PC-9 (cell line): ENCODE measurements at regions of chr13 and their contacts with region 1.

Region 1: GRCh38 chr13:106520205-106521054 is 15.0 kb downstream of the EFNB2 start:
- DNase-seq: no peak
- H3K4me3 ChIP-seq: peak overlapping the region; percentile 41; the same call in 1 of the 2 replicates
- H3K27ac ChIP-seq: peak overlapping the region; percentile 79
- H3K4me1 ChIP-seq: peaks cover 55% of the 10 kb centered on the region
- H3K27me3 ChIP-seq: no peaks in the 10 kb centered on the region
- CTCF ChIP-seq: peak; percentile 47

Region 2: GRCh38 chr13:105497597-105497996 is 1022.8 kb before region 1 on chr13:
- CTCF ChIA-PET with region 1: no interaction called
- POLR2A ChIA-PET with region 1: interaction called, 11 read pairs
- intact Hi-C with region 1: no loop called
- DNase-seq: peak; percentile 50 to 59
- H3K4me3 ChIP-seq: no peak overlapping the region
- H3K27ac ChIP-seq: no peak overlapping the region
- H3K4me1 ChIP-seq: peaks cover 12% of the 10 kb centered on the region
- H3K27me3 ChIP-seq: no peaks in the 10 kb centered on the region
- CTCF ChIP-seq: no peak

Region 3: DNA sequence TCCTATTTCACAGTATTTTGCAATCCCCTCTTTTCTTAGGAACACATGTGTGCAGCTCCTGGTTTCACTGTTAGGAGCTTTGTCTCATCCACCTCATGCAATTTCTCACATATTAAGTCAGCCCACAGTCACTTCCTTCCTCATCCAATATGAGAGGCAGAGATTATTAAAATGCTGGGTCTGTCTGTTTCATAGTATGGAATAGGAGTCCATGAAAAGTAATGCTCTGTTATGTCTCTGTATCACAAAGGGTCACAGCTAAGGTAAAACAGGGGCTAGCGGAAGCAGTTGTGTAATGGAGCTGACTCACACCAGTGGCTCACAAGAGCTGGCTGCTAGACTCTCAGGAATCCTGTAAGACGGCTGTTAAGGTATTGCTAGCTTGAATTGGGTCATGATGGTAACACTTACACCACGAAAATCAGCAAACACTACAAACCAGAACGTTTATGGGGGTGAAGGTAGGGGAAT is 201.5 kb before region 1 on chr13:
- CTCF ChIA-PET with region 1: no interaction called
- POLR2A ChIA-PET with region 1: no interaction called
- intact Hi-C with region 1: no loop called
- DNase-seq: peak; percentile 72 to 98
- H3K4me3 ChIP-seq: peak overlapping the region; percentile 24; the same call in 1 of the 2 replicates
- H3K27ac ChIP-seq: peak overlapping the region; percentile 96
- H3K4me1 ChIP-seq: peaks cover 27% of the 10 kb centered on the region
- H3K27me3 ChIP-seq: no peaks in the 10 kb centered on the region
- CTCF ChIP-seq: no peak

Region 4: DNA sequence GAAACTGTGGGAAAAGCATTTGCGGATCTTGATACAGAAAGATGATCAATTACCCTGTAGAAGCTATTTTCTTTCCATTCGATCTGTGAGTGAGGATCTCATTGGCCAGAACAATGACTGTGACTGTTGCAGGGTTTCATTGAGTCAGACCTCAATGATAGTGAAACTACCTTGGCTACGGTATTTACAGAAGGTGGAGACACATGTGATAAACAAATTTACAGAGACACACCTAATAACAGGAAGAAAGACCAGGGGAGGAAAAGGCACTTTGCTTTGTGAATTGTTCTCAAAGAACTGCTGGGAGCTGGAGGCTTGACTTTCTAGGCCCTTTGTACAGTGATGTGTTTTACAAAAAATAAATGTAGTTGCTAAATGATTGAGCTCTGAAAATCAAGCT is 67.4 kb after region 1 on chr13:
- CTCF ChIA-PET with region 1: no interaction called
- POLR2A ChIA-PET with region 1: no interaction called
- intact Hi-C with region 1: no loop called
- DNase-seq: peak in 1 of 2 experiments; percentile 43
- H3K4me3 ChIP-seq: no peak overlapping the region
- H3K27ac ChIP-seq: no peak overlapping the region
- H3K4me1 ChIP-seq: peaks cover 5% of the 10 kb centered on the region; the same call in 1 of the 2 replicates
- H3K27me3 ChIP-seq: no peaks in the 10 kb centered on the region
- CTCF ChIP-seq: no peak

Region 5: DNA sequence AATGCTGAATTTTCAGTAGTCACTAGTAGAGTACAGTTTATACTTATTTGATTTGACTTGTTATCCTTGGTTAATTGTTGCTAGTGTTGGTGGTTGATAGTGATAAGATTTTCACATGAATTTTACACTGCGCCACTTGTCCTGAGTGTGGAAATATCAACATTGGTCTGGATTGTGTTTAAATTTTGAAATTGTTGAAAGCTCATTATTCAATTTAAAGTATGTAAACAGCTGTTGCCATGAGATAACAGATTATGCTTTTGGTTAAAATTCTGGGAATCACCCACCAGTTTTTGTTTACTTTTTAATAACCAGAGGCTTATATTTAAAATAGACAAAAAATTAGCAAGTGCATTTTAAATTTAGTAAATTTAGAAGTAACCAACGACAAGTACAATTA is 1736.8 kb after region 1 on chr13:
- CTCF ChIA-PET with region 1: no interaction called
- POLR2A ChIA-PET with region 1: no interaction called
- intact Hi-C with region 1: no loop called
- DNase-seq: no peak
- H3K4me3 ChIP-seq: no peak overlapping the region
- H3K27ac ChIP-seq: no peak overlapping the region
- H3K4me1 ChIP-seq: no peaks in the 10 kb centered on the region
- H3K27me3 ChIP-seq: no peaks in the 10 kb centered on the region
- CTCF ChIP-seq: no peak